ENCODE measurements at regions of chr11 and their contacts with region 1.

Region 1: DNA sequence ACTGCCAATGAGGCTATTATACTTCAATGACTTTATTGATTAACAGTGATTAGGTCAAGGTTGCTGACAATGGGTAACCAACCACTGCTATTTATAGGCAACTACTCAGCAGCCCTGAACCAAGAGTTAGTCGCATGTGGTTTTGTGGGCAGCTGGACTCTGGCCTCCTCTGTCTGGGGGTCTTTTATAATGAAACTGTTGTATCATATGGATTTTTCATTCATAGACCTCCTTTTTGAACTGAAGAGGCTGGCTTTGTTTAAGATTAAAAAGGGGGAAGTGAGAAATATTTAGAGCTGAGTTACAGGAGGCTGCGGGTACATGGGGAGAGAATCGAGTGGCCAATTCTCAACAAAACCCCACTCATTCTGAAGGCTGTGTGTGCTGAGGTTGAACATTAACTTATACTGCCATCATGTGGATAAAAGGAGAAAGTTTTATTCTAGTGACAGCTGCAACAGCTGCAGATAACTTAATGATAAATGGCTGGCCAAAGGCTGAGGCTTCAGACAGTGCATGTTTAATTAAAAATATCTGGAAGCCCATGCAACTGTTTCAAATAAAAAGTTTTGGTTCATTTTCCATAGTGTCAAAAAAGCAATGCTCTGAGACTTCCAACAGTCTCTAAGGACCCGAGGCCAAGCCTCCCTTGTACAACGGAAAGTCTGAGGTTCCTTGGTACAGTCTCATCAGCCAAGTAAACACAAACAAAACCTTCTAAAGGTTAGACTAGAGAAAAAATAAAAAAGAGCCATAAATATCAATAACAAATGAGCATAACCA is 682.6 kb downstream of the KCNA4 start:
- DNase-seq: peak in 1 of 2 experiments; percentile 36
- H3K4me3 ChIP-seq: no peak overlapping the region
- H3K4me3 Mint-ChIP-seq: no peak overlapping the region
- H3K27ac Mint-ChIP-seq: no peak overlapping the region
- H3K4me1 ChIP-seq: peaks cover 18% of the 10 kb centered on the region
- H3K4me1 Mint-ChIP-seq: peaks cover 9% of the 10 kb centered on the region
- H3K27me3 ChIP-seq: no peaks in the 10 kb centered on the region
- H3K27me3 Mint-ChIP-seq: peaks cover 3% of the 10 kb centered on the region
- CTCF ChIP-seq: peak; percentile 41 to 50

Region 2: DNA sequence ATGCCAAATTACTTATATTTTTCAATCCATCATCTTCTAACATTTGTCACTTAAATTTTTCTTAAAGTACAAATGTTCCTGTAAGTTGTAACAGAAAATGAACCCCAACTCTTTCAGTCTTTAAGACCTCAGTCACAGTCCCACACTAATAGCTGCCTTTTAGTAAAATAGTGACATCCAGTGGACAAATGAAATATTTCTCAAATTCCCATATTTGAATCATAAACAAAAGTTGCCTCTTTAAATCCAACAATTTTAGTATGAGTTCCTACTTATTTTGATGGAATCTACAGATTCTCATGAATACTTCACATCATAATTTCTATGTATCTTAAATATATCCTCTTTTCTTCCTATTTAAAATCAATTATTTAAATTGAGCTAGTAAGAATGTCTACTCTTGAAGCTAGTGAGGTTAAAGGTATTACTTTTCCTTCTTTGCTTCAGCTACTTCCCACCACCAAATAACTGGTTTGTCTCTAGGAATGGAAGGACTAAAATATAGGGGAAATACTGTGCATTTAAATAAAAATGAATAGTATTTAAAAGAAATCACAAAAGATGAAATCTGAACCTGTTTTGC is 1836.8 kb before region 1 on chr11:
- CTCF ChIA-PET with region 1: no interaction called
- POLR2A ChIA-PET with region 1: no interaction called
- intact Hi-C with region 1: loop called (anchors 2 kb)
- DNase-seq: no peak
- H3K4me3 ChIP-seq: no peak overlapping the region
- H3K4me3 Mint-ChIP-seq: no peak overlapping the region
- H3K27ac Mint-ChIP-seq: no peak overlapping the region
- H3K4me1 ChIP-seq: no peaks in the 10 kb centered on the region
- H3K4me1 Mint-ChIP-seq: no peaks in the 10 kb centered on the region
- H3K27me3 ChIP-seq: no peaks in the 10 kb centered on the region
- H3K27me3 Mint-ChIP-seq: no peaks in the 10 kb centered on the region
- CTCF ChIP-seq: peak in 1 of 2 experiments; percentile 55

Region 3: GRCh38 chr11:28938091-28938490 is 396.1 kb before region 1 on chr11:
- CTCF ChIA-PET with region 1: no interaction called
- POLR2A ChIA-PET with region 1: no interaction called
- intact Hi-C with region 1: no loop called
- DNase-seq: no peak
- H3K4me3 ChIP-seq: no peak overlapping the region
- H3K4me3 Mint-ChIP-seq: no peak overlapping the region
- H3K27ac Mint-ChIP-seq: no peak overlapping the region
- H3K4me1 ChIP-seq: no peaks in the 10 kb centered on the region
- H3K4me1 Mint-ChIP-seq: no peaks in the 10 kb centered on the region
- H3K27me3 ChIP-seq: no peaks in the 10 kb centered on the region
- H3K27me3 Mint-ChIP-seq: no peaks in the 10 kb centered on the region
- CTCF ChIP-seq: no peak

Region 4: DNA sequence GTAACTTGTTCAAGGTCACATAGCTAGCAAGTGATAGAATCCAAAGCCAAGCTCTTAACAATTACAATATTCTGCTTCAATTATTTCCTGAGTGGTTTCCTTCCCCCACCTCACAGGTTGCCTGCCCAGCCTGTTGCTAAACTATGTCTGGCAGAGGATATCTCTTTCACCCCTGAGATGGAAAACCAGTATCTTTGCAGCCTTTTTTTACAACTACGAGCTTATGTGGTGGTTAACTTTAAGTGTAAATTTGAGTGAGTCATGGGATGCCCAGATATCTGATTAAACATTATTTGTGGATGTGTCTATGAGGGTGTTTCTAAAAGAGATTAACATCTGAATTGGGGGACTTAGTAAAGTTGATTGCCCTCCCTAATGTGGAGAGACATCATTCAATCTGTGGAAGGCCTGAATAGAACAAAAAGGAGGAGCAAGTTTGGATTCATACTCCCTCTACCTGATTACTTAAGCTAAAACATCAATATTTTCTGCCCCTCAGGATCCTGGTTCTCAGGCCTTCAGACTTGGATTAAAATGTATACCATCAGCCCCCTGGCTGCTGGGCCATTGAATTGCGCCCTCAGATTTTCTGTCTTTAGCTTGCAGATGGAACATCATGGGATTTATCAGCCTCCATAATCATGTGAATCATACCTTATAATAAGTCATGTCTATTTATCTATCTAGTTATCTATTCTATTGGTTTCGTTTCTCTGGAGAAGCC is 314.1 kb before region 1 on chr11:
- CTCF ChIA-PET with region 1: no interaction called
- POLR2A ChIA-PET with region 1: no interaction called
- intact Hi-C with region 1: loop called (anchors 10 kb)
- DNase-seq: peak in 1 of 2 experiments; percentile 20
- H3K4me3 ChIP-seq: no peak overlapping the region
- H3K4me3 Mint-ChIP-seq: no peak overlapping the region
- H3K27ac Mint-ChIP-seq: no peak overlapping the region
- H3K4me1 ChIP-seq: no peaks in the 10 kb centered on the region
- H3K4me1 Mint-ChIP-seq: no peaks in the 10 kb centered on the region
- H3K27me3 ChIP-seq: no peaks in the 10 kb centered on the region
- H3K27me3 Mint-ChIP-seq: no peaks in the 10 kb centered on the region
- CTCF ChIP-seq: peak; percentile 45 to 50

Region 5: DNA sequence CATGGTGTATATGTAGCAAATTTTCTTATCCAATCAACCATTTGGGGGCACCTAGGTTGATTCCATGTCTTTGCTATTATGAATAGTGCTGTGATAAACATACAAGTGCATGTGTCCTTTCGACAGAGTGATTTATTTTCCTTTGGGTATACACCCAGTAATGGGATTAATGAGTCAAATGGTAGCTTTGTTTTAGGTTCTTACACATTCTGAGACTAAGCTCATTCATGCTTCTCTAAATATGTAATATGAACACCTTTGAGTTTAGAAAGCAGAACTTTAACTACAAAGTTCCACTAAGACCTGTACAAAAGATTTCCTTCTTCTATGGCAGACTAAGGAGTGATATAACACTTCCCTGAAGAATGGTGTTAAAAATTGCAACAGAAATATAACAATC is 55.6 kb after region 1 on chr11:
- CTCF ChIA-PET with region 1: no interaction called
- POLR2A ChIA-PET with region 1: no interaction called
- intact Hi-C with region 1: no loop called
- DNase-seq: no peak
- H3K4me3 ChIP-seq: no peak overlapping the region
- H3K4me3 Mint-ChIP-seq: no peak overlapping the region
- H3K27ac Mint-ChIP-seq: no peak overlapping the region
- H3K4me1 ChIP-seq: no peaks in the 10 kb centered on the region
- H3K4me1 Mint-ChIP-seq: no peaks in the 10 kb centered on the region
- H3K27me3 ChIP-seq: no peaks in the 10 kb centered on the region
- H3K27me3 Mint-ChIP-seq: peaks cover 6% of the 10 kb centered on the region
- CTCF ChIP-seq: no peak